ENCODE measurements at regions of chr1 and their contacts with region 1.

Region 1: GRCh38 chr1:200888349-200888838 is 6.3 kb upstream of the INAVA start:
- DNase-seq: peak; percentile 85
- H3K4me3 Mint-ChIP-seq: no peak overlapping the region
- H3K27ac Mint-ChIP-seq: no peak overlapping the region
- H3K4me1 Mint-ChIP-seq: peaks cover 46% of the 10 kb centered on the region
- H3K27me3 Mint-ChIP-seq: peaks cover 25% of the 10 kb centered on the region

Region 2: GRCh38 chr1:200628223-200628881 is 260.0 kb before region 1 on chr1:
- CTCF ChIA-PET with region 1: interaction called, 3 read pairs
- intact Hi-C with region 1: loop called (anchors 1 kb)
- DNase-seq: peak; percentile 43
- H3K4me3 Mint-ChIP-seq: no peak overlapping the region
- H3K27ac Mint-ChIP-seq: no peak overlapping the region
- H3K4me1 Mint-ChIP-seq: peaks cover 32% of the 10 kb centered on the region
- H3K27me3 Mint-ChIP-seq: no peaks in the 10 kb centered on the region

Region 3: DNA sequence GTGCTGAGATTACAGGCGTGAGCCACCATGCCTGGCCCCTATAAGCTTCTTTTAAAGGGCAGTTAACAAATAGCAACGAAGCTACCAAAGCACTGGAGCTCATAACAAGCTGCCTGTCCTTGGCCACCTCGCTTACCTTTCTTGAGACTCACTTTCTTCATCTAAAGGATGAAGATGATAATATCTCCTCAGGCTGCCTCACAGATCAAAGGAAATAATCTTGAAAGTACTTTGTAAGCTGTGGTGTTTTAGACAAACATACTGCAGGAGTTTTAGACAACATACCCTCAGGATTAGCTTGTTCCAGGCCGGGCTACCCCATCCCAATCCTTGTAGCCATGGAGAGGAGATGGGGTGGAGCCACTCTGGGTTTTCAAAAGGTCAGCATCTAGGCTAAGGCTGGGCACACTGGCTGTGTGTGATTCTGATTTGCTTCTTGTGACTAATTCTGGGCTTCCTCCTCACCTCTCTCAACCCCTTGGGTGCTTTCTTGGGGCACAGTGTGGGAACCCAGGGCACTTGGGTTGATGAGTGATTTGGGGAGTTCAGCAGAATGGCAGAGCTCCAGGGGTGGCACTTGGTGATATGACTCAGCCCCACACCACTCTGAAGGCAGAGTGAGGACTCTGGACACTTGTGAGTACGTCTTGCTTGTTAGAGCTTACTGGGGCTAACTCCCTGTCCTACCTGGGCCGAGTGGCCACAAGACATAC is 10.4 kb before region 1 on chr1:
- CTCF ChIA-PET with region 1: interaction called, 4 read pairs
- intact Hi-C with region 1: loop called (anchors 1 kb)
- DNase-seq: peak; percentile 76
- H3K4me3 Mint-ChIP-seq: no peak overlapping the region
- H3K27ac Mint-ChIP-seq: no peak overlapping the region
- H3K4me1 Mint-ChIP-seq: peaks cover 22% of the 10 kb centered on the region
- H3K27me3 Mint-ChIP-seq: peaks cover 24% of the 10 kb centered on the region

Region 4: DNA sequence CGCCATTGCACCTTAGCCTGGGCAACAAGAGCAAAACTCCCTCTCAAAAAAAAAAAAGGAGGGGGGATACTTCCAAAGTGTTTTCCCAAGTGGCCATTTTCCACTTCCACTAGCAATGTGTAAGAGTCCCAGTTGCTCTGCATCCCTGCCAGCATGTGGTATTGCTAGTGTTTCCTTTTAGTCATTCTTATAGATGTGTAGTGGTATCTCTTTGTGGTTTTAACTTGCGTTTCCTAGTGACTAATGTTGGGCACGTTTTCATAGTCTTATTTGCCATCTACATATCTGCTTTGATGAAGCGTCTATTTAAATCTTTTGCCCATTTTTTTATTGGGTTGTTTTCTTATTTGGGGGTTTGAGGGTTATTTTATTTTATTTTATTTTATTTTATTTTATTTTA is 37.4 kb after region 1 on chr1:
- CTCF ChIA-PET with region 1: no interaction called
- intact Hi-C with region 1: loop called (anchors 2 kb)
- DNase-seq: peak; percentile 32
- H3K4me3 Mint-ChIP-seq: no peak overlapping the region
- H3K27ac Mint-ChIP-seq: no peak overlapping the region
- H3K4me1 Mint-ChIP-seq: peaks cover 2% of the 10 kb centered on the region
- H3K27me3 Mint-ChIP-seq: peaks cover 5% of the 10 kb centered on the region

Region 5: DNA sequence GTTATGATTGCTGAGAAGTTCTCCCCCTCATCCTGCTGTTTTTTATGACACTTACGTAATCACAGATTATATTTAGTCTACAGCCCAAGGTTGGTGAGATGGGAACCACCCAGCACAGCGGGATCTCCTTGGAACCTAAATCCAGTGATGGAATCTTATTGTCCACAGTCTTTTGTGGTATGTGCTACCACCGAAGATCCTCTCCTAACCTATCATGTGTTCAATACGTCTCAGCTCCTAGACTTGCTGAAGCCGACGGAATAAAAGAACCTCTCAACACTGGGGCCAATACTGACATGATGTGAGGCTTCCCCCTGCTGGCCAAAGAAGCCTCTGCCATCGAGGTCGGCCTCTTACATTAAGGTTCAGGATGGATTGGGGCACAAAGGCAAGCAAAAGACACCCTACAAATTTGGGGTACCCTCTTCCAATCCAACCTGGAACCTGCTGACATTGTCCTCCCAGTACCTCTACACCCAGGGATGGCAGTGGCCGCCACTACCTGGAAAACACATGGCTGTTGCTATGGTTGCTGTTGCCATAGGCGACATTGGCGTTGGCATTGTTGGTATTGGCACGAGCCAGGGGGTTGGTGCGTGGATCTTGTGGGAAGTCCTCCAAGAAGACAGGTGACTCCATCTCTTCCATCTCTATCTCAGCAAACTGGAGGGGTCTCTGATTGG is 154.5 kb after region 1 on chr1:
- CTCF ChIA-PET with region 1: no interaction called
- intact Hi-C with region 1: loop called (anchors 1 kb)
- DNase-seq: peak; percentile 83
- H3K4me3 Mint-ChIP-seq: no peak overlapping the region
- H3K27ac Mint-ChIP-seq: no peak overlapping the region
- H3K4me1 Mint-ChIP-seq: no peaks in the 10 kb centered on the region
- H3K27me3 Mint-ChIP-seq: no peaks in the 10 kb centered on the region

Region 6: GRCh38 chr1:201114236-201115131 is 226.1 kb after region 1 on chr1:
- CTCF ChIA-PET with region 1: no interaction called
- intact Hi-C with region 1: loop called (anchors 2 kb)
- DNase-seq: peak; percentile 89
- H3K4me3 Mint-ChIP-seq: peak overlapping the region; percentile 81
- H3K27ac Mint-ChIP-seq: no peak overlapping the region
- H3K4me1 Mint-ChIP-seq: peaks cover 2% of the 10 kb centered on the region
- H3K27me3 Mint-ChIP-seq: peaks cover 2% of the 10 kb centered on the region